Activated B cell treated with CpG ODN at 0.5 μM for 24 hours (primary cell): ENCODE measurements at regions of chr7 and their contacts with region 1.

Region 1: GRCh38 chr7:143287935-143288826 is at the start of gene CASP2:
- DNase-seq: peak; percentile 97
- ATAC-seq: peak; percentile 91
- H3K4me3 Mint-ChIP-seq: peak within 1 kb of the TSS; percentile 96
- H3K27ac Mint-ChIP-seq: peak within 1 kb of the TSS; percentile 89
- H3K4me1 Mint-ChIP-seq: peaks cover 54% of the 10 kb centered on the region
- H3K27me3 Mint-ChIP-seq: no peaks in the 10 kb centered on the region
- CTCF ChIP-seq: no peak
- total RNA-seq, gene CASP2: 59.5 and 62.2 TPM in 2 replicates

Region 2: DNA sequence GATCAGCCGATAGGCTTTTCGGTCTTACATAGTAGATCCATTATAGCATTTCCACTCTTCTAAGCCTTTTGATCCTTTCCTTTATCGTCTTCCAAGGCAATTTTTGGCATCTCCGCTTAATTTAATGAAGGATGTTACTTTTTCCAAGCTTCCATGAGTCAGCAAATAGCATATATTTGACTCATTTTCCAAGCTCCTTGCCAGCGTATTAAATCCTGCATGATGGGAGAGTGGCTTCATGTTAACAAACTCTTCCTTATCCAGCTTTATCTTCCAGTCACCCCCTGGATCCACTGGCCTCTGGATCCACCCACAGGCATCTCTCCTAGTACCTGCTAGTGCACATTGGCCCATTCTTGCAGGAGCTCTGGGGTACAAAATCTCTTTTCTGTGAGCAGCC is 274.3 kb before region 1 on chr7:
- CTCF ChIA-PET with region 1: no interaction called
- POLR2A ChIA-PET with region 1: no interaction called
- intact Hi-C with region 1: loop called (anchors 2 kb)
- DNase-seq: no peak
- ATAC-seq: no peak
- H3K4me3 Mint-ChIP-seq: peak overlapping the region; percentile 21
- H3K27ac Mint-ChIP-seq: peak overlapping the region; percentile 95
- H3K4me1 Mint-ChIP-seq: peaks cover 83% of the 10 kb centered on the region
- H3K27me3 Mint-ChIP-seq: no peaks in the 10 kb centered on the region
- CTCF ChIP-seq: no peak

Region 3: DNA sequence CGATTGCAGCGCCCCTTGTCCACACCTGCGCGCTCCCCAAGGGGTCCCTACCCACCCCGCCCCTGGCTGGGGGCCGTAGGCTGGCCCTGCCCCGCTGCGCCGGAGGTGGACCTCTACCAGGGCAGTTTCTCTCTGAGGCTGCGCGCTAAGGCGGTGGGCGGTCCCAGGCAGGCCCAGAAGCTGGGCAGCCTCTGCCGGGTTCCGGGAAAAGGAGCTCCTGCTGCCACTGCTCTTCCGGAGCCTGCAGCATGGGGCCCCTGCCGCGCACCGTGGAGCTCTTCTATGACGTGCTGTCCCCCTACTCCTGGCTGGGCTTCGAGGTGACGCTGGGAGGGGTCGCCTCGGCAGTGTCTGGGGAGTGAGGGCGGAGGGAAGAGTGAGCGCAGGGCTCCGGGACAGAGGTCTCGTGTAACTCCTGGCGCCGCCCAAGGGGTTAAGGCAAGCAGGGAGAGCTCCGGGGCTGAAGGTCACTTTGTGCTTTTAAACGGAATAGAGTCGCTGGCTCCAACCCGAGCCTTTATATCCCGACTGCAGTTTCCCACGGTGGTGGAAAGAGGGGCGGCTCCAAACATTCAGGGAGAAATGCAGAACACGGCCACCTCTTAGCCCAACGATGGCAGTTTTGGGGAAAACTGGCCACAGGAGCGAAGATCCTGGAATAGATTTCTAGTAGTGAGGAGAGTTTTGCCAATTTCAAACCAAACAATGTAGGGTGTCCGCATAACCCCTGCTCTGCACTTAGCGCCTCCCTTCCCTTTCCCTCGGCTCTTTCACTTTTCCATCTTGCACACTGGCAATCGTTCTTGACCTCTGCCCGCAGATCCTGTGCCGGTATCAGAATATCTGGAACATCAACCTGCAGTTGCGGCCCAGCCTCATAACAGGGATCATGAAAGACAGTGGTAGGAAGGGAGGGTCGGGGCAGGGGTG is 24.6 kb before region 1 on chr7 and contains the start of gene GSTK1:
- CTCF ChIA-PET with region 1: no interaction called
- POLR2A ChIA-PET with region 1: interaction called, 23 read pairs
- intact Hi-C with region 1: loop called (anchors 1 kb)
- DNase-seq: peak; percentile 68
- ATAC-seq: peak; percentile 97
- H3K4me3 Mint-ChIP-seq: peak within 1 kb of the TSS; percentile 95
- H3K27ac Mint-ChIP-seq: peak within 1 kb of the TSS; percentile 83
- H3K4me1 Mint-ChIP-seq: peaks cover 52% of the 10 kb centered on the region
- H3K27me3 Mint-ChIP-seq: no peaks in the 10 kb centered on the region
- CTCF ChIP-seq: no peak
- total RNA-seq, gene GSTK1: 144 and 150 TPM in 2 replicates

Region 4: DNA sequence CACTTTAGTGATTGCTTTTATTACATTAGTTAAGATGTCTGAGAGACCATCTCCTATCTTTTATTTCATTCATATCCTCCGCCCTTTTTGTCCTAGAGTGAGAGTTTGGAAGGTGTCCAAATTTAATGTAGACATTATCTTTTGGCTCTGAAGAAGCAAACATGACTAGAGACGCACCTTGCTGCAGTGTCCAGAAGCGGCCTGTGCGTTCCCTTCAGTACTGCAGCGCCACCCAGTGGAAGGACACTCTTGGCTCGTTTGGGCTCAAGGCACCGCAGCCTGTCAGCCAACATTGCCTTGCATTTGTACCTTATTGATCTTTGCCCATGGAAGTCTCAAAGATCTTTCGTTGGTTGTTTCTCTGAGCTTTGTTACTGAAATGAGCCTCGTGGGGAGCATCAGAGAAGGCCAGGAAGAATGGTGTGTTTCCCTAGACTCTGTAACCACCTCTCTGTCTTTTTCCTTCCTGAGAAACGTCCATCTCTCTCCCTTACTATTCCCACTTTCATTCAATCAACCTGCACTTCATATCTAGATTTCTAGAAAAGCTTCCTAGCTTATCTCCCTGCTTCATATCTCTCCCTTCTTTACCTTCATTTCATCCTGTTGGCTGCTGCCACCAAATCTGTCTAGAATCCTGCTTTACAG is 17.4 kb after region 1 on chr7:
- CTCF ChIA-PET with region 1: interaction called, 4 read pairs
- POLR2A ChIA-PET with region 1: interaction called, 5 read pairs
- intact Hi-C with region 1: loop called (anchors 2 kb)
- DNase-seq: peak; percentile 24
- ATAC-seq: peak; percentile 65
- H3K4me3 Mint-ChIP-seq: no peak overlapping the region
- H3K27ac Mint-ChIP-seq: no peak overlapping the region
- H3K4me1 Mint-ChIP-seq: peaks cover 17% of the 10 kb centered on the region
- H3K27me3 Mint-ChIP-seq: no peaks in the 10 kb centered on the region
- CTCF ChIP-seq: no peak

Region 5: DNA sequence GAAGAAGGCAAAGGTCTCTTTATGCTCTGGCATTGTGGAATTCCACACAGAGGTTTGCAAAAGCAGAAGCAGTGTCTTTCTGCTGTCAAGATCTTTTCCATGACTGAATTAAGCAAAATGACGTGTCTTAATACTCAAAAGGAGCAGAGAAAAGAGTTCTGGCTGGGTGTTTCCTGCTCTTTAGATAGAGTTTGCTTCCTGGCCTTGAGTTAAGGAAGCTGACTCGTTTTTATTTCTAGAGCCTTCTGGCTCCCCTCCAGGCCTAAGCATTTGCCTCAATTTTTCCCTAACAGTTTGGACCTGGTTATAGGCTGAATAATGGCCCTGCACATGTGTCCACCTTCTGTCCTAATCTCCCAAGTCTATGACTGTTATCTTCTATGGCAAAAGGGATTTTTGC is 211.1 kb after region 1 on chr7:
- CTCF ChIA-PET with region 1: no interaction called
- POLR2A ChIA-PET with region 1: no interaction called
- intact Hi-C with region 1: no loop called
- DNase-seq: no peak
- ATAC-seq: no peak
- H3K4me3 Mint-ChIP-seq: no peak overlapping the region
- H3K27ac Mint-ChIP-seq: no peak overlapping the region
- H3K4me1 Mint-ChIP-seq: no peaks in the 10 kb centered on the region
- H3K27me3 Mint-ChIP-seq: peaks cover 9% of the 10 kb centered on the region
- CTCF ChIP-seq: no peak

Region 6: DNA sequence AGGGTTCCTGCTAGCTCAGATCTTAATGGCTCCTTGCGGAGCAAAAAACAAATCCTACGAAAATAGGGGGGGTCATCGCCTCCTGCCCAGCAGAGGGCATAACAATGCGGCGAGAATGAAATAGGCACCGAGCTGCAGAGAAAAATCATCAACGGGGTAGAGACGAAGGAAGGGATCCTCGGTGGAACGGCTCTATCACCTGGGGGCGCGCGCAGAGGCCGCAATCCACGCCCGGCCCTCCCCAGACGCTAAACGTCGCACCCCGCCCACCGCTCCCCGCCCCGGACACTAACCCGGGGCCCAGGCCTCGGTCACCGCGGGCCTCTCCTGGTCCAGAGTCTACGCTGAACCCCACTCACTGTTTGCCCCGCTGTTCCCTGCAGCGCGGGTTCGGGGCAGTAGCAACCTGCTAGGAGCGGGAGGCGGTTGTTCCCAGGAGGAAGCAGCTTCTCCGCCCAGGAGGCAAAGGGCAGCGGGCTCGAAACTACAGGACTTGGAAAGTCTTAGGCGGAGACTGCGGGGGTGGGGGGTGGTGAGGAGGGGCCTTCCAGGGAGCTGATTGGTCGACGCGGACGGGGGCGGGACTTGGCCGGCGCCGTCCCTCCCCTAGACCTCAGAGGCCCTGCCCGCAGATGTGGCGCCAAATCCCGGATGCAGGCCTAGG is 613.6 kb after region 1 on chr7 and contains the start of gene TCAF1:
- CTCF ChIA-PET with region 1: no interaction called
- POLR2A ChIA-PET with region 1: interaction called, 3 read pairs
- intact Hi-C with region 1: loop called (anchors 10 kb)
- DNase-seq: peak; percentile 85
- ATAC-seq: peak; percentile 96
- H3K4me3 Mint-ChIP-seq: peak within 1 kb of the TSS; percentile 94
- H3K27ac Mint-ChIP-seq: peak within 1 kb of the TSS; percentile 88
- H3K4me1 Mint-ChIP-seq: peaks cover 23% of the 10 kb centered on the region
- H3K27me3 Mint-ChIP-seq: no peaks in the 10 kb centered on the region
- CTCF ChIP-seq: no peak
- total RNA-seq, gene TCAF1: 12.0 and 13.4 TPM in 2 replicates